K562 (cell line): ENCODE measurements at regions of chr12 and their contacts with region 1.

Region 1: DNA sequence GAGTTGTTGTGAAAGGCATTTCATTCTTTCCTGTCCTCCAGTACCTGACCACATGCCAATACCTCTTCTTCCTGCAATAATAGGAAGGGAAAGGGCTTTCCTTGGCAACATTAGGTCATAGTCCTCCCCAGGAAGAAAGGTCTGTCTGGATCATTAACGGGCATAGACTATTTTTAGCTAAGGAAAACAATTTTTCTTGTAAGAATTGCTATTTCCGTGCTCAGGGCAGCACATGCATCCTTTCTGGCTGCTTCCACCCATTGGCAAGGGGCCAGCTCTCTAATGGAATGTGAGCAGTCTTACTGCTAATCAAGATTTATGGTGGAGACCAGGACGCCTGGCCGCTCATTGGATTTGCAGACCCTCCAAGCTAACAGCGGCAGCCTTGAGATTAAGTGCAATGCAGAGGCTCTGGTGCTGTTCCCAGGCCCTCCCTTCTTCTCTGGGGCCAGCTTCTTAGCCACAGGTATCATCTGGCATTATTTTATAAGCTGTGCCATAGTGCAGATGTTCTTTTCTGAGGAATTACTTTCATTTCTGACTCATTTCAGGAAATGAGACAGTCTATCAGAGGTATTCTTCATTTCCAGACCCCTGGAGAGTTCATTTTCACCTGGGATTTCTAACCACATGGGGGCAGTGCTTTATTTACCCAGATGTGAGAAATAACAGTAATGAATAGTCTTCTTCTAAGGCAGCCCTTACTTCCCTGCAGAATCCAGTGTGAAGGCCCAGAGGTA is 52.9 kb downstream of the ANO6 start:
- DNase-seq: peak in 3 of 4 experiments; percentile 17 to 58 (median 50)
- ATAC-seq: peak; percentile 83
- H3K4me3 ChIP-seq: no peak overlapping the region
- H3K27ac ChIP-seq: no peak overlapping the region
- H3K4me1 ChIP-seq: peaks cover under 1 to 23% of the 10 kb centered on the region in 2 experiments; a peak in 3 of 5 replicates
- H3K27me3 ChIP-seq: no peaks in the 10 kb centered on the region
- CTCF ChIP-seq: peak; percentile 40 to 67 (median 55); a peak in 5 of 6 replicates
- EP300 ChIP-seq: no peak
- POLR2A ChIP-seq: no peak
- RAD21 ChIP-seq: peak; percentile 58 to 75

Region 2: GRCh38 chr12:45170456-45171042 is 98.3 kb before region 1 on chr12:
- CTCF ChIA-PET with region 1: no interaction called
- POLR2A ChIA-PET with region 1: no interaction called
- in situ Hi-C with region 1: no loop called
- intact Hi-C with region 1: loop called (anchors 5 kb)
- DNase-seq: peak; percentile 69 to 83 (median 78)
- ATAC-seq: peak; percentile 93
- H3K4me3 ChIP-seq: no peak overlapping the region
- H3K27ac ChIP-seq: no peak overlapping the region
- H3K4me1 ChIP-seq: peaks cover 0 to 3% of the 10 kb centered on the region in 2 experiments; a peak in 1 of 5 replicates
- H3K27me3 ChIP-seq: no peaks in the 10 kb centered on the region
- CTCF ChIP-seq: peak; percentile 78 to 87 (median 86)
- EP300 ChIP-seq: no peak
- POLR2A ChIP-seq: no peak
- RAD21 ChIP-seq: peak; percentile 81 to 89

Region 3: DNA sequence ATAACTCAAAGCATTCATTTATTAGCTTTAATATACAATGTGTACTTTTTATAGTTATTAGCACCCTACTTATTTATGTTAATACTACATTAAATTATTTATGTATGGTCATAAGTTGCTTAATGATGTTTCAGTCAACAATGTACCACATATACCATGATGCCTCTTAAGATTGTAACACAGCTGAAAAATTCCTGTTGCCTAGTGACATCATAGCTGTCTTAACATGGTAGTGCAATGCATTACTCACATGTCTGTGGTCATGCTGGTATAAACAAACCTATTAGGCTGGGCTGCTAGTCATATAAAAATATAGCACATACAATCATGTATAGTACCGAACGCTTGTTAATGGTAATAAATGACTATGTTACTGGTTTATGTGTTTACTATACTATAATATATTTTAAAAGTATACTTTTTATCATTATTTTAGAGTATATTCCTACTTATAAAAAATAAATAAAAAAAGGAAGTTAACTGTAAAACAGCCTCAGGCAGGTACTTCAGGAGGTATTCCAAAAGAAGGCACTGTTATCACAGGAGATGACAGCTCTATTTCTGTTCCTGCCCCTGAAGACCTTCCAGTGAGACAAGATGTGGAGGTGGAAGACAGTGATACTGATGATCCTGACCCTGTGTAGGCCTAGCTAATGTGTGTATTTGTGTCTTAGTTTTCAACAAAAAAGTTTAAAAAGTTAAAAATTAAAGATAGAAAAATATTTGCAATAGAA is 67.7 kb after region 1 on chr12:
- CTCF ChIA-PET with region 1: no interaction called
- POLR2A ChIA-PET with region 1: no interaction called
- in situ Hi-C with region 1: no loop called
- intact Hi-C with region 1: loop called (anchors 5 kb)
- DNase-seq: peak in 2 of 4 experiments; percentile 14 to 54
- ATAC-seq: peak; percentile 79
- H3K4me3 ChIP-seq: no peak overlapping the region
- H3K27ac ChIP-seq: peak overlapping the region; percentile 80; the same call in 2 of the 3 replicates
- H3K4me1 ChIP-seq: peaks cover 0 to 28% of the 10 kb centered on the region in 2 experiments; a peak in 3 of 5 replicates
- H3K27me3 ChIP-seq: no peaks in the 10 kb centered on the region
- CTCF ChIP-seq: no peak
- EP300 ChIP-seq: no peak
- POLR2A ChIP-seq: no peak
- RAD21 ChIP-seq: no peak

Region 4: GRCh38 chr12:45388545-45388944 is 119.7 kb after region 1 on chr12:
- CTCF ChIA-PET with region 1: no interaction called
- POLR2A ChIA-PET with region 1: no interaction called
- in situ Hi-C with region 1: no loop called
- intact Hi-C with region 1: loop called (anchors 1 kb)
- DNase-seq: peak in 3 of 4 experiments; percentile 16 to 36 (median 32)
- ATAC-seq: peak; percentile 62; the same call in 2 of the 3 replicates
- H3K4me3 ChIP-seq: no peak overlapping the region
- H3K27ac ChIP-seq: no peak overlapping the region
- H3K4me1 ChIP-seq: no peaks in the 10 kb centered on the region
- H3K27me3 ChIP-seq: no peaks in the 10 kb centered on the region
- CTCF ChIP-seq: peak; percentile 37 to 59 (median 57); a peak in 3 of 6 replicates
- EP300 ChIP-seq: no peak
- POLR2A ChIP-seq: no peak
- RAD21 ChIP-seq: peak; percentile 59 to 65

Region 5: DNA sequence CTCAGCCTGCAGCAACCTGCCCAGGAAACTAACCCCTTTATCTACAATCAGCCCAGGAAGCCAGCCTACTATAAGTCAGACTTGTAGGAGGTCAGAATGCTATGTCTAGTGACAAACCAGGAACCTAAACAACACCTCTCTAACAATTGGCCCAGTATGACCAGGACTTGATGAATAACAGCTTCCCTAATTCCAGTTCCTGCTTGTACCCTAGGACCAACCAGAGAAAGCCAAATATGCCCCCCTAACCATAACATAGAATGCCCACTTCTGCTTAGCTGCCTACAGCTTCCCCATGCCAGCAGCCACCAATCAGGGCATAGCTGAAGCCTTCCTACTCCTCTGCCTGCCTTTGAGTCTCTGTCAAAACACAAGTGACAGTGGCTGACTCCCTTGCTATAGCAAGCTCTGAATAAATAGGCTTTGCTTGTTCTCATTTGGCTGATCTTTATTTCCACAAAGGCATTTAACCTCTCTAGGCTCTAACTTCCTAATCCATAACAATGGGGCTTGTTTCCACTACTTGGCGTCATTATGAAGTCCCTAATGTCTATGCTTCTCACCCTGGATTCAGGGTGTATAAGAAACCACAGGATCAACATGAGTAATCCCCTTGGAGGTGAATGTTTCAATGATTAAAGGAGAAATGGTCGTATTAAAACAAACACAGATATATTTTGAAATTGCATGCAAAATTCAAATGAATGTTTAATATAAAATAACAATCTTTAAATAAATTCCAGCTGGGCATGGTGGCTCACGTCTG is 167.3 kb after region 1 on chr12:
- CTCF ChIA-PET with region 1: no interaction called
- POLR2A ChIA-PET with region 1: no interaction called
- in situ Hi-C with region 1: no loop called
- intact Hi-C with region 1: loop called (anchors 10 kb)
- DNase-seq: no peak
- ATAC-seq: peak; percentile 56; the same call in 2 of the 3 replicates
- H3K4me3 ChIP-seq: no peak overlapping the region
- H3K27ac ChIP-seq: no peak overlapping the region
- H3K4me1 ChIP-seq: no peaks in the 10 kb centered on the region
- H3K27me3 ChIP-seq: no peaks in the 10 kb centered on the region
- CTCF ChIP-seq: no peak
- EP300 ChIP-seq: no peak
- POLR2A ChIP-seq: no peak
- RAD21 ChIP-seq: no peak

Region 6: GRCh38 chr12:45728630-45729232 is 459.9 kb after region 1 on chr12:
- CTCF ChIA-PET with region 1: no interaction called
- POLR2A ChIA-PET with region 1: no interaction called
- in situ Hi-C with region 1: no loop called
- intact Hi-C with region 1: loop called (anchors 10 kb)
- DNase-seq: peak; percentile 72 to 97 (median 80)
- ATAC-seq: peak; percentile 73
- H3K4me3 ChIP-seq: peak overlapping the region; percentile 71
- H3K27ac ChIP-seq: peak overlapping the region; percentile 95
- H3K4me1 ChIP-seq: peaks cover 4 to 6% of the 10 kb centered on the region in 2 experiments; a peak in 3 of 5 replicates
- H3K27me3 ChIP-seq: no peaks in the 10 kb centered on the region
- CTCF ChIP-seq: peak; percentile 89 to 98 (median 97)
- EP300 ChIP-seq: peak; percentile 72
- POLR2A ChIP-seq: peak; percentile 95
- RAD21 ChIP-seq: peak; percentile 43 to 61